A673 (cell line): ENCODE measurements at regions of chr19 and their contacts with region 1.

Region 1: GRCh38 chr19:40523322-40524047 is 53.2 kb upstream of the SHKBP1 start:
- DNase-seq: peak; percentile 83
- H3K4me3 ChIP-seq: no peak overlapping the region
- H3K27ac ChIP-seq: no peak overlapping the region
- H3K4me1 ChIP-seq: no peaks in the 10 kb centered on the region
- H3K27me3 ChIP-seq: peaks cover 14% of the 10 kb centered on the region
- CTCF ChIP-seq: peak; percentile 90

Region 2: DNA sequence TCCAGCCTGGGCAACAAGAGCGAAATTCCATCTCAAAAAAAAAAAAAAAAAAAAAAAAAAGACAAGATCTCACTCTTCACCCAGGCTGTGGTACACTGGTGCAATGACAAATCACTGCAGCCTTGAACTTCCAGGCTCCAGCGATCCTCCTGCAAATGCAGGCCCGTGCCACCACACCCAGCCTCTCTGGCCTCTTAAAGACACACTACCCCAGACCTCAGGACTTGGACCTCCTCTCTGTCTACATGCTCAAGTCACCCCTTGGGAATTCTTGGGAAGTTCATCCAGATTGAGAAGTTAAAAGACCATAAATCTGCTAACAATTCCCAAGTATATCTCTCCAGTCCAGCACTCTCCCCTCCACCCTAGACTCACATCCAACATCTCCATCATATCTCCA is 122.9 kb before region 1 on chr19:
- CTCF ChIA-PET with region 1: interaction called, 14 read pairs
- POLR2A ChIA-PET with region 1: no interaction called
- intact Hi-C with region 1: no loop called
- DNase-seq: no peak
- H3K4me3 ChIP-seq: no peak overlapping the region
- H3K27ac ChIP-seq: no peak overlapping the region
- H3K4me1 ChIP-seq: no peaks in the 10 kb centered on the region
- H3K27me3 ChIP-seq: no peaks in the 10 kb centered on the region
- CTCF ChIP-seq: no peak

Region 3: DNA sequence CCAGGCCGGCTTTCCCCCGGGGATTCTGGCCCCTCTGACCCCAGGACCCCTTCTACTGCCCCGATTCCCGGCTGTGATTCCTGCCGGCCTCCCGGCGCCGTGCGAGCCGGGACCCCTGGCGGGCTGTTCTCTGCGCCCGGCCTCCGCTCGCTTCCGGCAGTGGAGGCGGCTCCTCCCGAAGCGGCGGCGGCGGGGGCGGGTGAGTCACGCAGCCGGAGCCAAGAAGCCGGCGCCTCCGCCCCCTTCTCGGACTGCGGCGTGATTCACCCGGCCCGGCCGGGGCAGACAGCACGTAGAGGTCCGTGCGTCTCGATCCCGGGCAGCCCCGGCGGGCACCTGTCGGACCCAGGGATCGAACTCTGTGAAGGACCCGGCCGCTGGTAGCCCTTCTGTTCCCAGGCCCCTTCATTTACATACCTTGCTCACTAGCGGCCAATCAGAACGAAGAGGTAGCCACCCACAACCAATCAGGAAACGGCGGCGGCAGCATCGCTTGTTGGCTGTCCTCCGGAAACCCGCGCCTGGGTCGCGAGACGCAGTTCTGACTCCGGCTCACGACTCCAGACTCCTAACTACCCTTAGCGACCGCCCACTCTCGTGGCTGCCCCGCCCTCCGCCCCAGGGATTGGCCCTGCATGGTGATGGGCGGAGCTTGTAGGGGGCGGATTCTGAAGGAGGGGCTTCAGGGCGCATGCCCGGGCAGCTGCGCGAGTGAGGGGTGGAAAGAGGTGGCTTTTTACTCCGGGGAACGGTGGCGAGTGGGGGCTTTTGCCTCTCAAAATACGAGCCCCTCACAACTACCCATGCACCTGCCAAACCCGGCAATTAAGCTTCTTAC is 97.8 kb before region 1 on chr19 and contains the start of gene SERTAD1:
- CTCF ChIA-PET with region 1: interaction called, 10 read pairs
- POLR2A ChIA-PET with region 1: no interaction called
- intact Hi-C with region 1: loop called (anchors 5 kb)
- DNase-seq: peak; percentile 100
- H3K4me3 ChIP-seq: peak within 1 kb of the TSS; percentile 68
- H3K27ac ChIP-seq: peak within 1 kb of the TSS; percentile 91
- H3K4me1 ChIP-seq: peaks cover 6% of the 10 kb centered on the region
- H3K27me3 ChIP-seq: no peaks in the 10 kb centered on the region
- CTCF ChIP-seq: peak; percentile 82
- total RNA-seq, gene SERTAD1: 9.6 and 16.5 TPM in 2 replicates

Region 4: DNA sequence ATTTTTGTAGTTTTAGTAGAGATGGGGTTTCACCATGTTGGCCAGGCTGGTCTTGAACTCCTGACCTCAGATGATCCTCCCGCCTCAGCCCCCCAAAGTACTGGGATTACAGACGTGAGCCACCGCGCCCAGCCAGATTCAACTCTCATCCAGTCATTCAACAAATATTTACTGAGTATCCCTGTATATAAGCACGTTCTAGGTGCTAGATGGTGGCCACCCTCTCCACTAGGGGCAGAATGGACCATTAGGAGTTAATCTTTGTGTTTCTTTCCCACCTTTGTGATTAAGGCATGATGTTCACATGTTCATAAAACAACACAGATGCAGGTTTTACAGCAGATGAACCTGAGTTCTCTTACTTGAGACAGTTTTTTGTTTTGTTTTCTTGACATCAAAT is 60.5 kb after region 1 on chr19:
- CTCF ChIA-PET with region 1: interaction called, 14 read pairs
- POLR2A ChIA-PET with region 1: no interaction called
- intact Hi-C with region 1: no loop called
- DNase-seq: no peak
- H3K4me3 ChIP-seq: no peak overlapping the region
- H3K27ac ChIP-seq: no peak overlapping the region
- H3K4me1 ChIP-seq: no peaks in the 10 kb centered on the region
- H3K27me3 ChIP-seq: no peaks in the 10 kb centered on the region
- CTCF ChIP-seq: peak; percentile 39

Region 5: GRCh38 chr19:40798223-40798996 is 274.9 kb after region 1 on chr19:
- CTCF ChIA-PET with region 1: interaction called, 11 read pairs
- POLR2A ChIA-PET with region 1: no interaction called
- intact Hi-C with region 1: no loop called
- DNase-seq: peak; percentile 100
- H3K4me3 ChIP-seq: peak overlapping the region; percentile 50
- H3K27ac ChIP-seq: peak overlapping the region; percentile 62
- H3K4me1 ChIP-seq: peaks cover 37% of the 10 kb centered on the region
- H3K27me3 ChIP-seq: no peaks in the 10 kb centered on the region
- CTCF ChIP-seq: peak; percentile 57

Region 6: DNA sequence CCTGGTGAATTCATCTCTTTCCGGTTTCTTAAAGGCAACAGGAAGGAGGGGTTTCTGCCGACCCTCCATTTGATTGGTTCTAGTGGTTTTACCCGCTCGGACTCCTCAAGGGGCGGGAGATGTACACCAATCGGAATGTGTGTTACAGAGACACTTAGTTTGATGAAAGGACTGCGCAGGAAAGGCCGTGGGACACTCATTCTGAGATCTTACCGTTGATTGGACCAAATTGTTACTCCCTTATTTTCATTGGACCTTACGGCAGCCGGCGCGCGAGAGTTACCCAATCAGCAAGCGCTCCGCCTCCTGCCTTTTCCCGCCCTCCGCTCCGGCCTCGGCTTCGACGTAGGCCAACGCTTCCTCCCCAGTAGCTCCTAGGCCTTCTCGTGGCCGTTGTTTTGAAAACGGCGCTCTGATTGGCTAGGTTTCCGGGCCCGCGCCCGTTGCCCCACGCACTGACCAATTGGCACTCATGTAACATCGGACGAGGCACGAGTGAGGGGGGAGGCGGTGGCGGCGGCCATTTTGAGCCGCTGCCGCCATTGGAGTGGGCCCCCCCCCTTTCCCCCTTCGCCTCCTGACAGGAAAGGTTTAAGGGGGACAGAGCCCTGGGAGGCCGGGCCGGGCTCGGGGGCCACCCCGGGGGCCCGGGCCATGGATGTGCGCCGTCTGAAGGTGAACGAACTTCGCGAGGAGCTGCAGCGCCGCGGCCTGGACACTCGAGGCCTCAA is 740.5 kb after region 1 on chr19 and contains the start of gene HNRNPUL1:
- CTCF ChIA-PET with region 1: no interaction called
- POLR2A ChIA-PET with region 1: no interaction called
- intact Hi-C with region 1: no loop called
- DNase-seq: peak; percentile 100
- H3K4me3 ChIP-seq: peak within 1 kb of the TSS; percentile 90
- H3K27ac ChIP-seq: peak within 1 kb of the TSS; percentile 99
- H3K4me1 ChIP-seq: peaks cover 8% of the 10 kb centered on the region
- H3K27me3 ChIP-seq: no peaks in the 10 kb centered on the region
- CTCF ChIP-seq: 0 out of 2 replicates have a peak, but pooled peaks have one; percentile 34
- total RNA-seq, gene HNRNPUL1: 342 and 344 TPM in 2 replicates